A673 (cell line): ENCODE measurements at regions of chr16 and their contacts with region 1.

Region 1: GRCh38 chr16:56931271-56931891 is 561 bp upstream of the HERPUD1 start:
- DNase-seq: peak; percentile 26
- H3K4me3 ChIP-seq: peak overlapping the region; percentile 94
- H3K27ac ChIP-seq: peak overlapping the region; percentile 96
- H3K4me1 ChIP-seq: peaks cover 17% of the 10 kb centered on the region
- H3K27me3 ChIP-seq: no peaks in the 10 kb centered on the region
- CTCF ChIP-seq: no peak

Region 2: GRCh38 chr16:56980792-56981724 is 49.7 kb after region 1 on chr16:
- CTCF ChIA-PET with region 1: no interaction called
- POLR2A ChIA-PET with region 1: interaction called, 20 read pairs
- intact Hi-C with region 1: no loop called
- DNase-seq: no peak
- H3K4me3 ChIP-seq: no peak overlapping the region
- H3K27ac ChIP-seq: no peak overlapping the region
- H3K4me1 ChIP-seq: peaks cover 15% of the 10 kb centered on the region
- H3K27me3 ChIP-seq: no peaks in the 10 kb centered on the region
- CTCF ChIP-seq: no peak

Region 3: DNA sequence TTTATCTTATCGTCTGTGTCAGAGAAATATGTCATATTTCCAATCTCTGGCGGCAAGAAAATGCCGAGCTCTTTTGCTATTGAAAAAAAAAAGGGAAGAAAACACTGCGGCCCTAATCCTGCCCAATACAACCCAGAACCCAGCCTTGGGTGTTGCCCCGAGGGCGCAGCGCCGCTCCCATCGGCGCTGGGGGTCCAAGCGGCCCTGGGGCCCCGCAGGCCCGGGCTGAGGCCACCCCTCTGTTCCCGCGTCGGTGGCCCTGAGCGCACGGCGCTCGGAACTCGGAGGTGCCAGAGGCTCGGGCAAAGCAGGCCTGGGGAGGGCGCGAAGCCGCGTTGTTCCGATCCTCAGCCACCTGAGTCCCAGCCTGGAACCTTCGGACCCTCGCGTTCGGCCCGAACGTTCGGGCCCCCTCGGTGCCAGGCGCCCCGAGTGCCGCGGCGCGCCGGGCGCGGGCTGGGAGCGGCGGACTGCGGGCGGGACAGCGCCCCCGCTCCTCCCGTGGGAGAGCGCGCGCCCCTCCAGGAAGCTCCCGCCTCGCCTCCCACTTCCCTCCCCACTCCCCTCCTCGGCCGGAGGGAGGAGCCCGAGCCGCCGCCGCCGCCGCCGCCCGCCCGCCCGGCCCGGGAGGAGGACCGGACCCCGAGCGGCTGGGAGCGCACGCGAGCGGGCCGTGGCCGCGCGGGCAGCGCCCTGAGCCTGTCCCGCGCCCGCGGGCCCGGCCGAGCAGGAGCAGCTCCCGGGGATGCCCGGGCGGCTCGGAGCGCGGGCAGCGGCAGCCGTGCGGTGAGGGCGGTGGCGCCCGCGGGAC is 160.8 kb after region 1 on chr16 and contains the start of gene CPNE2:
- CTCF ChIA-PET with region 1: no interaction called
- POLR2A ChIA-PET with region 1: interaction called, 27 read pairs
- intact Hi-C with region 1: no loop called
- DNase-seq: peak; percentile 84
- H3K4me3 ChIP-seq: peak within 1 kb of the TSS; percentile 80
- H3K27ac ChIP-seq: peak within 1 kb of the TSS; percentile 72
- H3K4me1 ChIP-seq: peaks cover 15% of the 10 kb centered on the region
- H3K27me3 ChIP-seq: no peaks in the 10 kb centered on the region
- CTCF ChIP-seq: no peak
- total RNA-seq, gene CPNE2: 38.1 and 43.6 TPM in 2 replicates

Region 4: GRCh38 chr16:57167953-57168352 is 236.6 kb after region 1 on chr16:
- CTCF ChIA-PET with region 1: no interaction called
- POLR2A ChIA-PET with region 1: no interaction called
- intact Hi-C with region 1: no loop called
- DNase-seq: peak; percentile 82
- H3K4me3 ChIP-seq: no peak overlapping the region
- H3K27ac ChIP-seq: no peak overlapping the region
- H3K4me1 ChIP-seq: peaks cover 15% of the 10 kb centered on the region
- H3K27me3 ChIP-seq: no peaks in the 10 kb centered on the region
- CTCF ChIP-seq: peak; percentile 79

Region 5: DNA sequence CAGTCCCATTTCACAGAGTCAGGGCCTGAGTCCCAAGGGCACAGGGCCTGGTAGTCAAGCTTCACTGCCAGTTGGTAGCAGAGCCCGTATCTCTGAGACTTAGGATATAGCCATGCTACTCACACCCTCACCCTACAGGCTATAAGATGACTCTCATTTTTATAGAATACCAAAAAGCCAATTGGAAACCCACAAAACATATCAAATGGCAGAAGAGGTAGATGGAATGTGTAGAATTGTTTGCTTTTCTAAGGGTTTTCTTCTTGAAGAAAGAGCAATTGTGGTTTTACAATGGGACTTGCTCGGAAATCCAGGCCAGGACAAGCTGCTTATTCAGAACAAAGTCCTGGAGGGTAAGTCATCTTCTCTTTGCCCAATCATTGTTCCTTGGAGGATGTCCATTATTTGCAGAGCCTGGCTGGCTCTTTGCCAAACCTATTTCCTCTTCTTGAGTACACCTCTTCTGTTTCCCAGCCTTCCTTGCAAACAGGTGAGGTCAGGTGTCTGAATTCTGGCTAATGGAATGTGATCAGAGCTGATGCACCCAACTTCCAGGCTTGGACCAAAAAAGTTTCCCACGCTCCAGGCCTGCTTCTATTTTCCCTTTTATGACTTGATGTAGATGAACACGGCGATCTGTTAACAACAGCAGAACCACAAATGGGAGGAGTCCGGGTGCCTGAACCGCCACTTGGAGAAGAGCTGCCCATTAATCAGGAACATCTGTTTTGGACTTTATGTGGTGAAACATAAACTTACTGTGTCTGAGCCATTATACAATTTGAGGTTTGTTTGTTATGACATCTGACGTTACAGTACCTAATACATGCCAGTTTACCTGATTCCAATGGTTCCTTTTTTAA is 410.3 kb after region 1 on chr16:
- CTCF ChIA-PET with region 1: no interaction called
- POLR2A ChIA-PET with region 1: no interaction called
- intact Hi-C with region 1: no loop called
- DNase-seq: peak; percentile 41
- H3K4me3 ChIP-seq: no peak overlapping the region
- H3K27ac ChIP-seq: no peak overlapping the region
- H3K4me1 ChIP-seq: no peaks in the 10 kb centered on the region
- H3K27me3 ChIP-seq: peaks cover 1% of the 10 kb centered on the region
- CTCF ChIP-seq: no peak

Region 6: GRCh38 chr16:57447186-57447962 is 516.0 kb after region 1 on chr16 and contains the starts of genes CIAPIN1 and COQ9:
- CTCF ChIA-PET with region 1: no interaction called
- POLR2A ChIA-PET with region 1: interaction called, 15 read pairs
- intact Hi-C with region 1: no loop called
- DNase-seq: peak; percentile 97
- H3K4me3 ChIP-seq: peak within 1 kb of the TSS; percentile 94
- H3K27ac ChIP-seq: peak within 1 kb of the TSS; percentile 97
- H3K4me1 ChIP-seq: no peaks in the 10 kb centered on the region
- H3K27me3 ChIP-seq: no peaks in the 10 kb centered on the region
- CTCF ChIP-seq: no peak
- total RNA-seq, gene CIAPIN1: 95.1 and 96.9 TPM in 2 replicates
- total RNA-seq, gene COQ9: 65.6 and 69.7 TPM in 2 replicates